Activated CD4-positive, alpha-beta T cell treated with anti-CD3 and anti-CD28 coated beads, Interleukin-2, amount 10 ng/mL, durations not matched to agents 24 days and 14 days (primary cell): ENCODE measurements at regions of chr18 and their contacts with region 1.

Region 1: GRCh38 chr18:59918320-59918755 is 18.5 kb downstream of the PMAIP1 start:
- DNase-seq: no peak
- H3K4me3 Mint-ChIP-seq: peak overlapping the region; percentile 1
- H3K27ac Mint-ChIP-seq: peak overlapping the region; percentile 3
- H3K4me1 Mint-ChIP-seq: peaks cover 21% of the 10 kb centered on the region
- H3K27me3 Mint-ChIP-seq: no peaks in the 10 kb centered on the region

Region 2: DNA sequence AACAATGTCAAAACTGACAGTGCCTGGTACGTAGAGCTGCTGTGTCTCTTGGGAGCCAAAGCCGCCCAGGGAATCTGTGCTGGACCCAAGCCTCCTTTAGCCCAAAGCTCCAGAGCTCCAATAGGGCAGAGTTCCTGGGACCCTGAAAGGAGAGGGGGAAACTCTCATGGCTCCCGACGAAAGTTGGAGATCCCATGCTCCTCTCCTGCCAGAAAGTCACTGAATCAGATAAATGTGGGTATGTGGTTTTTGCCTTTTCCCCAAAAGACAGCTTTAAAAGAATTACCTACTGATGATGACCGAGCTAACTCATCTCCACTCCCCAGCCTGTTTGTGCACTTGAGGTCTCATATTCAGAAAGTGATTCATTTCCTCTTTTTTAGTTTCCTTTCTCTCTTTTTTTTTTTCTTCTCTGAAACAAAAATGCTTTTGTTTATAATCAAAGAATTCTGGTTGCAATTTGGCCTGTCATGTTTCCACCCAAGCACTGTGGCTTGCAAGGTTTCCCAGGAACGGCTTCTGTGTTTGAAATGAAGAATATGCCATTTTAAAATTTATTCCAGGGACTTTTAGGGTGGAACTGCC is 32.7 kb before region 1 on chr18:
- intact Hi-C with region 1: loop called (anchors 5 kb)
- DNase-seq: peak; percentile 80
- H3K4me3 Mint-ChIP-seq: peak overlapping the region; percentile 61
- H3K27ac Mint-ChIP-seq: peak overlapping the region; percentile 67
- H3K4me1 Mint-ChIP-seq: peaks cover 51% of the 10 kb centered on the region
- H3K27me3 Mint-ChIP-seq: no peaks in the 10 kb centered on the region

Region 3: GRCh38 chr18:59907172-59907571 is 11.2 kb before region 1 on chr18:
- intact Hi-C with region 1: loop called (anchors 1 kb)
- DNase-seq: peak; percentile 70
- H3K4me3 Mint-ChIP-seq: peak overlapping the region; percentile 65
- H3K27ac Mint-ChIP-seq: peak overlapping the region; percentile 76
- H3K4me1 Mint-ChIP-seq: peaks cover 66% of the 10 kb centered on the region
- H3K27me3 Mint-ChIP-seq: no peaks in the 10 kb centered on the region